Activated CD8-positive, alpha-beta T cell treated with anti-CD3 and anti-CD28 coated beads, Interleukin-2, amount 10 ng/mL, durations not matched to agents 7 days and 5 days (primary cell): ENCODE measurements at regions of chr5 and their contacts with region 1.

Region 1: GRCh38 chr5:59174248-59174844 is 591.5 kb downstream of the RAB3C start:
- DNase-seq: peak; percentile 64
- ATAC-seq: peak; percentile 88
- H3K4me3 Mint-ChIP-seq: no peak overlapping the region
- H3K27ac Mint-ChIP-seq: no peak overlapping the region
- H3K4me1 Mint-ChIP-seq: peaks cover 41% of the 10 kb centered on the region
- H3K27me3 Mint-ChIP-seq: no peaks in the 10 kb centered on the region

Region 2: DNA sequence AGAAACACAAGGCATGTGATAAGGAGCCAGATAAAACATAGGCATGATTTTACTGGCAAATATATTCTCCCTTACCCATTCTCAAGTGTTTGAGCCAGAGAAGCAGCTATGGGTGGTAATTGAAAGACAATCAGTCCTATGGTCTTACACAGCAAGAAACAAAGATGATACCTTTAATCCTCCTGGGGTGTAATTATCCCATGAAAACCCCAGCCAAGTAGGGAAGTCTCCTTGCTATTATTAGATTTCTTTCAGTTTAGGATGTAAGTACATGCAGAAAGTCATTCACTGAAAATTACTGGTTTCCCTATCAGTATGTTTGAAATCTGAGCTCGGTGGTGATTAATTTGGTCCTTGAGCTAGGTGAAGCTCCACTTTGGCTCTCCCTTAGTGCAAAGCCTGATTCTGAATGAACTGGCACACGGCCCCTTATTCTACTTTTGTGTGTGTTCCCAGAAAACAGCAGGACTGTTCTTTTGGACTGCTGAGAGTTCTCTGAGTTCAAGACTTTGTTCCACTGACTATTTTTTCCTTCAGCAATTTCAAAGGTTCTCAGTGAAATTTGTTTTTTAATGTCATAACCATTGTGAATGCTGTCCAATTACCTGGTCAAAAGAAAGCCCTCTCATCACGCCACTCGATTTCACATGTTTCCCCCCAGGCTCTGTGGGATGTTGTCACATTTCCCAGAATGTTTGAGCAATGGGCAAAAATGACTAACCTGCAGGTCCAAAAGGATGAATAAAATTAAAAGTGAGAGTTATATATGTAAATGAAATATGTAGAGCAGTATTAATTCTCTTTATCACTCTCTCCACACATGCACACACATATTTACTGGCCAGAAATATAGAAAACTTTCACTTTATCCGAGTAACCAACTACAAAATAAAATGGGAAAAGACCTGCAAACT is 248.5 kb before region 1 on chr5:
- CTCF ChIA-PET with region 1: no interaction called
- POLR2A ChIA-PET with region 1: no interaction called
- DNase-seq: no peak
- ATAC-seq: no peak
- H3K4me3 Mint-ChIP-seq: no peak overlapping the region
- H3K27ac Mint-ChIP-seq: no peak overlapping the region
- H3K4me1 Mint-ChIP-seq: peaks cover 5% of the 10 kb centered on the region
- H3K27me3 Mint-ChIP-seq: peaks cover 26% of the 10 kb centered on the region

Region 3: GRCh38 chr5:58999804-59000595 is 174.3 kb before region 1 on chr5:
- CTCF ChIA-PET with region 1: interaction called, 15 read pairs
- POLR2A ChIA-PET with region 1: no interaction called
- DNase-seq: no peak
- ATAC-seq: no peak
- H3K4me3 Mint-ChIP-seq: no peak overlapping the region
- H3K27ac Mint-ChIP-seq: no peak overlapping the region
- H3K4me1 Mint-ChIP-seq: peaks cover 53% of the 10 kb centered on the region
- H3K27me3 Mint-ChIP-seq: no peaks in the 10 kb centered on the region

Region 4: GRCh38 chr5:59027145-59027907 is 147.0 kb before region 1 on chr5:
- CTCF ChIA-PET with region 1: interaction called, 234 read pairs
- POLR2A ChIA-PET with region 1: no interaction called
- DNase-seq: no peak
- ATAC-seq: no peak
- H3K4me3 Mint-ChIP-seq: no peak overlapping the region
- H3K27ac Mint-ChIP-seq: no peak overlapping the region
- H3K4me1 Mint-ChIP-seq: peaks cover 54% of the 10 kb centered on the region
- H3K27me3 Mint-ChIP-seq: no peaks in the 10 kb centered on the region

Region 5: GRCh38 chr5:59126708-59127573 is 47.4 kb before region 1 on chr5:
- CTCF ChIA-PET with region 1: interaction called, 94 read pairs
- POLR2A ChIA-PET with region 1: interaction called, 9 read pairs
- DNase-seq: no peak
- ATAC-seq: peak; percentile 35
- H3K4me3 Mint-ChIP-seq: no peak overlapping the region
- H3K27ac Mint-ChIP-seq: no peak overlapping the region
- H3K4me1 Mint-ChIP-seq: peaks cover 19% of the 10 kb centered on the region
- H3K27me3 Mint-ChIP-seq: no peaks in the 10 kb centered on the region

Region 6: DNA sequence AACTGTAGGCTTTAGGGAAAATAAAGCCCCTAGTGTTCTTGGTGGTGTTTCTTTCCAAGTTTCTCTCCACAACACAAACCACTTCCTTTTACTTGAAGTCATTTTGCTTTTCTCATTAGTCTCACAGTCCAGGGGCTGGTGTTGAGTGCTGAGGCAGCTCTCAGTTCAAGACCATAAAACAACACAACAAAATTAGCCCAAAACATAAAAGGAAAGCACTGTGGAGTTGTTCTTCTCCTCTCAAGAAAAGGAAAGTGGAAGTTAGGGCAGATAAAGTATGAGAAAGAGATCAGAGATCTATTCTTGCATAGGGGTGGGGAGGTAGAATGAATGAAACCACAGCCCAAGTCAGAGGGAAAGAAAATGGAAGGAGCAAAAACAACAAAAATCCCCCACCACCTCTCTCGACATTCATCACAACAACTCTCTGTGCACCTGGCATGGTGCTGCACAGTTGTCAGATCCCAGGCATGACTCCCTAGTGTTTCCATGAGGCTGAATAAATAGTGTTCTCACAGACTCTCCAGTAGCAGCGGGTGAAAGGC is 21.6 kb before region 1 on chr5:
- CTCF ChIA-PET with region 1: interaction called, 29 read pairs
- POLR2A ChIA-PET with region 1: no interaction called
- DNase-seq: no peak
- ATAC-seq: peak; percentile 66
- H3K4me3 Mint-ChIP-seq: peak overlapping the region; percentile 44
- H3K27ac Mint-ChIP-seq: no peak overlapping the region
- H3K4me1 Mint-ChIP-seq: peaks cover 9% of the 10 kb centered on the region
- H3K27me3 Mint-ChIP-seq: no peaks in the 10 kb centered on the region

Region 7: DNA sequence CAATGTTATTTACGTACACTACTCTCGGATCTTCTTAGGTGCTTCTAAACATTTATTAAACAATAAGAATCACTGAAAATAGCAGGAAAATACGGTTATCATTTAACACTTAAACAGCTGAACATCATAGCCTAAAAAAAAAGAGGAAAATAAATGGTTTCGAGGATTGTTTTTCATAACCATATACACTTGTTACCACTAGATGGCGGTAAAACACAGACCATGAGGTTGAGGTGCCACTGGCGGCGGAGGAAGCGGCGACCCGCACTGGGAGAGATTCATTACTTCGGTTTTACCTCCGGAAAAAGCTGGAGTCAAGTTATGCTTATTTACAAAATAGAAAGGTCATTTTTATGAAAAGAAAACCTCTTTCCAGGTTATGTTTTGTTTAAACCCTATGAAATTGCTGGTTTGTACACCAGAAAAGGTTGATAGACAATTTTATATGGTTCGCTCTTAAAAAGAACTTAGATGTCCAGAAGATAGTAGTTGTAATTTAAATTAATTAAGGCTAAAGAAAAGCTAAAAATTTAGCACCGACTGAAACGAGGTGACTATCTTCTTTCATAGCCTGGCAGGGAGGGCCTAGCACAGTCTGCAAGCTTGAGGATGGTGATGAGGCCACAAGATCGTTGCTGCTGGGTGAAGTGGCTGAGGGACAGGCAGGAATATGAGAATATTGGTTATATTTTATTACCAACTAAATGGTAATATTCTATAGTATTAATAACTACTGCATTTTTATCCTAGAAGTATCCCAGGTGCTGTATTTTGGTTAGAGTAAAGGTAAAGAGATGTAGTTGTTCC is 14.3 kb after region 1 on chr5:
- CTCF ChIA-PET with region 1: interaction called, 52 read pairs
- POLR2A ChIA-PET with region 1: no interaction called
- DNase-seq: peak; percentile 75
- ATAC-seq: peak; percentile 81
- H3K4me3 Mint-ChIP-seq: no peak overlapping the region
- H3K27ac Mint-ChIP-seq: no peak overlapping the region
- H3K4me1 Mint-ChIP-seq: peaks cover 5% of the 10 kb centered on the region
- H3K27me3 Mint-ChIP-seq: peaks cover 36% of the 10 kb centered on the region